ENCODE measurements at regions of chr7 and their contacts with region 1.

Region 1: DNA sequence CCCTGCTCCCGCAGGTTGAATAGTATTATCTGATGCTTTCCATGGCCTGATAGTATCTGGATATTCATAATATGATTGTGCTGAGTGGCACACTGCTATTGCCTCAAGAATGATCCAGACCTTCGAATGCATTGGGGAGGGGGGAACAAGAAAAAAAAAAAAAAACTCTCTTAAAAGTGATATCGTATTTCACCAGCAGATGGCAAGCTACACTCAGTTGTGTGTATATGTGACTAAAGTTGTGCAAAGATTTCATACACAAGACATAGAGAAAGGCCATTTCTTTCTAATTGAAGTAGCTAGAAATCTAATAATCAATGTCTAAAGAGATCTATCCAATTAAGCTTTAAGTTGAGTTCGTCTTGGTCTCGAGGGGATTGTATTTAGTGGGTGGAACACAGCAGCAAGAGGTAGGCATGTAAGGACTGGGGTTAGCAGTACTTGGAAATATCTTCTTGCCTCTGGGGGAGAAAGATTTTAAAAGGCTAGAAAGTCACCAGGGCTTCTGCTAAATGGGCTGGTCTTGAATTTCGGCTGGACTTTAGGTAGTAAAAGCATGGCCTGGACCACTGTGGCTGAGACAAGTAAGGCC is 15.3 kb downstream of the SFRP4 start:
- DNase-seq: peak; percentile 37 to 58 (median 41)
- ATAC-seq: peak; percentile 87
- H3K4me3 ChIP-seq: no peak overlapping the region
- H3K27ac ChIP-seq: no peak overlapping the region
- H3K4me1 ChIP-seq: peaks cover 5 to 6% of the 10 kb centered on the region in 2 experiments; a peak in 3 of 5 replicates
- H3K27me3 ChIP-seq: no peaks in the 10 kb centered on the region
- CTCF ChIP-seq: peak; percentile 50 to 80 (median 58); a peak in 5 of 6 replicates
- EP300 ChIP-seq: no peak
- POLR2A ChIP-seq: no peak
- RAD21 ChIP-seq: peak; percentile 69 to 79

Region 2: GRCh38 chr7:36958111-36958733 is 943.1 kb before region 1 on chr7:
- CTCF ChIA-PET with region 1: no interaction called
- POLR2A ChIA-PET with region 1: no interaction called
- in situ Hi-C with region 1: no loop called
- intact Hi-C with region 1: no loop called
- DNase-seq: no peak
- ATAC-seq: no peak
- H3K4me3 ChIP-seq: no peak overlapping the region
- H3K27ac ChIP-seq: no peak overlapping the region
- H3K4me1 ChIP-seq: no peaks in the 10 kb centered on the region
- H3K27me3 ChIP-seq: no peaks in the 10 kb centered on the region
- CTCF ChIP-seq: no peak
- EP300 ChIP-seq: no peak
- POLR2A ChIP-seq: no peak
- RAD21 ChIP-seq: no peak

Region 3: DNA sequence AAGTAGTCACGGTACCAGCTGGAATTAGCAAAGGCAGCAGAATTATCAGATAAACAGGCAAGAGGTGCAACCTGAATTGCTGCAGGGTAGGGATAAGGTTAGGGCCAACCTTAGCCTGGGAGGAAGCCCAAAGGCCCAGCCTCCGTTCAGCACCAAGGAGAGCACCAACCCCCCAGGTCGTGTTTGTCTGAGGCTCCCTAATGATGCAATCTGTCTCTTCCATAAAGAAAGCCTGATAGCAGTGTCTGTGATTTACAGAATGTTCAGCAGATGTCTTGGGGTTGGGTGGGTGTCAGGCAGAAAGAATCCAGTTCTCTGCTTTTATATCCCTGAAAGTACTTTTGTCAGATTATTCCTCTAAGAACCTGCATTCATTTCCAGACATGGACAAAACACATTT is 848.6 kb before region 1 on chr7:
- CTCF ChIA-PET with region 1: no interaction called
- POLR2A ChIA-PET with region 1: no interaction called
- in situ Hi-C with region 1: no loop called
- intact Hi-C with region 1: no loop called
- DNase-seq: peak; percentile 28 to 48 (median 34)
- ATAC-seq: peak; percentile 71
- H3K4me3 ChIP-seq: no peak overlapping the region
- H3K27ac ChIP-seq: no peak overlapping the region
- H3K4me1 ChIP-seq: no peaks in the 10 kb centered on the region
- H3K27me3 ChIP-seq: no peaks in the 10 kb centered on the region
- CTCF ChIP-seq: no peak
- EP300 ChIP-seq: no peak
- POLR2A ChIP-seq: no peak
- RAD21 ChIP-seq: no peak

Region 4: GRCh38 chr7:37592366-37592765 is 309.0 kb before region 1 on chr7:
- CTCF ChIA-PET with region 1: no interaction called
- POLR2A ChIA-PET with region 1: no interaction called
- in situ Hi-C with region 1: no loop called
- intact Hi-C with region 1: no loop called
- DNase-seq: no peak
- ATAC-seq: no peak
- H3K4me3 ChIP-seq: no peak overlapping the region
- H3K27ac ChIP-seq: no peak overlapping the region
- H3K4me1 ChIP-seq: peaks cover 0 to 4% of the 10 kb centered on the region in 2 experiments; a peak in 2 of 5 replicates
- H3K27me3 ChIP-seq: no peaks in the 10 kb centered on the region
- CTCF ChIP-seq: no peak
- EP300 ChIP-seq: no peak
- POLR2A ChIP-seq: no peak
- RAD21 ChIP-seq: no peak

Region 5: DNA sequence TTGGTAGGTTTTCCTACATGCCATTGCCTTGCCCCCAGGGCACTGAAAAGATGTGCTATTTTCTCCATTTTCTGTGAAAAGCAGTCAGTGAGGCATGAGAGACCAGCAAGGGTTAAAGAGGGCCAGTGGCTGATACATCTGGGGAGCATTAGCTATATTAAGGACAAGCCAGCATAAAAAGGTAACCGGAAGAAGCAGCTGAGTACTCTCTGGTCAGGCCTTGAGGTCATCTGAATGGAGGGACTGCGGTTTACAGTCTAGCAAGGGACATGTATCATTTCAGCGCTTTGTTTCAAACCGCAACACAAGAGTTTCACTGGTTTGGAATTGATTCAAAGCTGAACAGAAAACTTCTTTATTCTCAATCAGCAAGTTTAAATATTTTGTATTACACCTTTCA is 139.5 kb after region 1 on chr7:
- CTCF ChIA-PET with region 1: interaction called, 3 read pairs
- POLR2A ChIA-PET with region 1: no interaction called
- in situ Hi-C with region 1: no loop called
- intact Hi-C with region 1: loop called (anchors 1 kb)
- DNase-seq: peak in 1 of 4 experiments; percentile 10
- ATAC-seq: peak; percentile 53; the same call in 1 of the 3 replicates
- H3K4me3 ChIP-seq: no peak overlapping the region
- H3K27ac ChIP-seq: no peak overlapping the region
- H3K4me1 ChIP-seq: no peaks in the 10 kb centered on the region
- H3K27me3 ChIP-seq: no peaks in the 10 kb centered on the region
- CTCF ChIP-seq: no peak
- EP300 ChIP-seq: no peak
- POLR2A ChIP-seq: no peak
- RAD21 ChIP-seq: no peak

Region 6: GRCh38 chr7:38222481-38223096 is 321.3 kb after region 1 on chr7:
- CTCF ChIA-PET with region 1: interaction called, 31 read pairs
- POLR2A ChIA-PET with region 1: no interaction called
- in situ Hi-C with region 1: loop called (anchors 5 kb)
- intact Hi-C with region 1: loop called (anchors 2 kb)
- DNase-seq: peak; percentile 54 to 73 (median 65)
- ATAC-seq: peak; percentile 88
- H3K4me3 ChIP-seq: no peak overlapping the region
- H3K27ac ChIP-seq: no peak overlapping the region
- H3K4me1 ChIP-seq: no peaks in the 10 kb centered on the region
- H3K27me3 ChIP-seq: no peaks in the 10 kb centered on the region
- CTCF ChIP-seq: peak; percentile 79 to 90 (median 82)
- EP300 ChIP-seq: no peak
- POLR2A ChIP-seq: no peak
- RAD21 ChIP-seq: peak; percentile 87 to 92

Region 7: GRCh38 chr7:38318803-38319416 is 417.6 kb after region 1 on chr7:
- CTCF ChIA-PET with region 1: interaction called, 8 read pairs
- POLR2A ChIA-PET with region 1: no interaction called
- in situ Hi-C with region 1: no loop called
- intact Hi-C with region 1: loop called (anchors 5 kb)
- DNase-seq: peak in 3 of 4 experiments; percentile 30 to 66 (median 55)
- ATAC-seq: peak; percentile 92
- H3K4me3 ChIP-seq: no peak overlapping the region
- H3K27ac ChIP-seq: no peak overlapping the region
- H3K4me1 ChIP-seq: no peaks in the 10 kb centered on the region; a peak in 1 of 5 replicates
- H3K27me3 ChIP-seq: 0 out of 5 replicates have a peak, but pooled peaks cover 0 to 5% of the 10 kb centered on the region in 2 experiments
- CTCF ChIP-seq: peak; percentile 59 to 82 (median 63)
- EP300 ChIP-seq: no peak
- POLR2A ChIP-seq: no peak
- RAD21 ChIP-seq: peak; percentile 79 to 91

Region 8: DNA sequence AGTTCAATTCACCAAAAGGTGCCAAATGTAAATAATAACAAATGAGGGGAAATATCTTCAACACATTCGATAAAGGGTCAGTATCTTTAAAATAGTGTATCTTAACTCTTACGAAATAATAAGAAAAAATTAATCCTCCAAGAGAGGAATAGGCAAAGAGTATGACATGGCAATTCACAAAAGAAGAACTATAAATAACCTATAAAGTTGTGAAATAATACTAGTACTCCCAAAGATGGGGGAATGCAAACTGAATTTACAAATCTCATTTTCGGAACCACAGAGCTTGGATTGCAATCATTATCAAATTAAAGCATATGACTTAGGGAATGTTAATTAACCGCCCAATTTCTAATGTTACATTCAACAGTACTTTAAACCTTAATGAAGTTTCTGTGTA is 450.3 kb after region 1 on chr7:
- CTCF ChIA-PET with region 1: no interaction called
- POLR2A ChIA-PET with region 1: no interaction called
- in situ Hi-C with region 1: loop called (anchors 10 kb)
- intact Hi-C with region 1: no loop called
- DNase-seq: no peak
- ATAC-seq: no peak
- H3K4me3 ChIP-seq: no peak overlapping the region
- H3K27ac ChIP-seq: no peak overlapping the region
- H3K4me1 ChIP-seq: no peaks in the 10 kb centered on the region; a peak in 1 of 5 replicates
- H3K27me3 ChIP-seq: no peaks in the 10 kb centered on the region
- CTCF ChIP-seq: no peak
- EP300 ChIP-seq: no peak
- POLR2A ChIP-seq: no peak
- RAD21 ChIP-seq: no peak